CD8-positive, alpha-beta T cell (primary cell): ENCODE measurements at regions of chr9 and their contacts with region 1.

Region 1: GRCh38 chr9:128191406-128192046 is at the start of gene CIZ1:
- DNase-seq: peak; percentile 42 to 87 (median 75)
- ATAC-seq: peak; percentile 80
- H3K4me3 ChIP-seq: peak within 1 kb of the TSS; percentile 77 to 78
- H3K4me3 Mint-ChIP-seq: peak within 1 kb of the TSS; percentile 94
- H3K27ac ChIP-seq: peak within 1 kb of the TSS; percentile 58 to 68
- H3K27ac Mint-ChIP-seq: peak within 1 kb of the TSS; percentile 92
- H3K4me1 ChIP-seq: peaks cover 16% of the 10 kb centered on the region
- H3K4me1 Mint-ChIP-seq: peaks cover 35% of the 10 kb centered on the region
- H3K27me3 ChIP-seq: no peaks in the 10 kb centered on the region
- H3K27me3 Mint-ChIP-seq: no peaks in the 10 kb centered on the region
- CTCF ChIP-seq: peak; percentile 65
- total RNA-seq, gene CIZ1: 109 to 116 TPM

Region 2: DNA sequence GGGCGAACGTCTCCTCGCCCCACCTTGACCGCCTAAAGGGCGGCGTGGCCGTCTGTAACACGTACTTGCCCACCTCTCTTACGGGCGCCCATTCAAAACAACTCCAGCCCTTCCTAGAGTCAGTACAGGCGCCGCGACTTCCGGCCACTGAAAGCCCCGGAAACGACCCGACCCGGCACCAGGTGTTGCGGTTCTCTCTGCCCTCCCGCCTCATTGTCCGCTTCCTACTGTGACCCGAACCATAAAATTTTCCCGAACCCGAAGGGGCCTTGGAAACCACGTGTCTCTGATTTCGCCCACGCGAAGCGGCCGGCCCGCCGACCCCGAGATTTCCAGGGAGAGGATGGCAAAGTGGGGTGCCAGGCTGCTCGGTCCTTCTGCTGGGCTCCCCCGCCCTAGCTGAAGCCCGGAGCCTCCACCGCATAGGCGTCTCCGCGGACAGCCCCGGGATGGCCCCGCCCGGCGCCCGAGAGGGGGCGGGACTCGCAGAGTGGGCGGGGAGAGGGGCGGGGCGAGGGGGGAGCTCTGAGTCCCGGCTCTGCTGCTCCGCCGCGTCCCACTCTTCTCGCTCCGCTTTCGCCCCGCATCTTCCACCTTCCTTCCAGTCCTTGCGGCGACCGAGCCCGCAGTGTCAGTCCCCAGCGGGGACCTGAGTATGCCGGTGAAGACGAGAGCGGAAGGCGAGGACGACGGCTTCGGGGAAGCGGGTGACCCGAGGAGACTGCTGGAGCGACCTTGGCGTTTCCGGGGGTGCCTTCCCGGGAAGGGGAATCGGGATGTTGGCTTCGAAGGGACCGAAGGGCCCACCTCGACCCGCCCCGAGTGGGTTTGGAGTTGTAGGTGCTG is 63.3 kb before region 1 on chr9:
- CTCF ChIA-PET with region 1: no interaction called
- POLR2A ChIA-PET with region 1: no interaction called
- intact Hi-C with region 1: loop called in 1 of 2 experiments (anchors 2 kb)
- DNase-seq: peak; percentile 69 to 95 (median 83)
- ATAC-seq: peak; percentile 81
- H3K4me3 ChIP-seq: peak overlapping the region; percentile 99 to 100
- H3K4me3 Mint-ChIP-seq: peak overlapping the region; percentile 99
- H3K27ac ChIP-seq: peak overlapping the region; percentile 99
- H3K27ac Mint-ChIP-seq: peak overlapping the region; percentile 99
- H3K4me1 ChIP-seq: peaks cover 31% of the 10 kb centered on the region
- H3K4me1 Mint-ChIP-seq: peaks cover 38% of the 10 kb centered on the region
- H3K27me3 ChIP-seq: no peaks in the 10 kb centered on the region
- H3K27me3 Mint-ChIP-seq: peaks cover 2% of the 10 kb centered on the region
- CTCF ChIP-seq: no peak

Region 3: GRCh38 chr9:128203024-128203706 is 11.6 kb after region 1 on chr9 and contains the start of gene DNM1:
- CTCF ChIA-PET with region 1: interaction called, 5 read pairs
- POLR2A ChIA-PET with region 1: interaction called, 7 read pairs
- intact Hi-C with region 1: loop called (anchors 1 kb)
- DNase-seq: peak; percentile 52 to 88 (median 67)
- ATAC-seq: peak; percentile 99
- H3K4me3 ChIP-seq: peak within 1 kb of the TSS; percentile 55 to 66
- H3K4me3 Mint-ChIP-seq: peak within 1 kb of the TSS; percentile 72
- H3K27ac ChIP-seq: no peak within 1 kb of the TSS
- H3K27ac Mint-ChIP-seq: no peak within 1 kb of the TSS
- H3K4me1 ChIP-seq: peaks cover 13% of the 10 kb centered on the region
- H3K4me1 Mint-ChIP-seq: peaks cover 9% of the 10 kb centered on the region
- H3K27me3 ChIP-seq: peaks cover 3 to 9% of the 10 kb centered on the region in 2 experiments
- H3K27me3 Mint-ChIP-seq: peaks cover 10% of the 10 kb centered on the region
- CTCF ChIP-seq: peak; percentile 85
- total RNA-seq, gene DNM1: 1.4 to 1.5 TPM

Region 4: GRCh38 chr9:128275996-128276573 is 84.6 kb after region 1 on chr9 and contains the starts of genes GOLGA2 and SWI5:
- CTCF ChIA-PET with region 1: no interaction called
- POLR2A ChIA-PET with region 1: no interaction called
- intact Hi-C with region 1: loop called (anchors 1 to 2 kb)
- DNase-seq: peak; percentile 99 to 100 (median 100)
- ATAC-seq: peak; percentile 93
- H3K4me3 ChIP-seq: peak within 1 kb of the TSS; percentile 75 to 81
- H3K4me3 Mint-ChIP-seq: peak within 1 kb of the TSS; percentile 96
- H3K27ac ChIP-seq: peak within 1 kb of the TSS; percentile 76 to 81
- H3K27ac Mint-ChIP-seq: peak within 1 kb of the TSS; percentile 96
- H3K4me1 ChIP-seq: peaks cover 22% of the 10 kb centered on the region
- H3K4me1 Mint-ChIP-seq: peaks cover 32% of the 10 kb centered on the region
- H3K27me3 ChIP-seq: no peaks in the 10 kb centered on the region
- H3K27me3 Mint-ChIP-seq: no peaks in the 10 kb centered on the region
- CTCF ChIP-seq: no peak
- total RNA-seq, gene GOLGA2: 49.9 to 59.0 TPM
- total RNA-seq, gene SWI5: 3.5 to 4.3 TPM

Region 5: DNA sequence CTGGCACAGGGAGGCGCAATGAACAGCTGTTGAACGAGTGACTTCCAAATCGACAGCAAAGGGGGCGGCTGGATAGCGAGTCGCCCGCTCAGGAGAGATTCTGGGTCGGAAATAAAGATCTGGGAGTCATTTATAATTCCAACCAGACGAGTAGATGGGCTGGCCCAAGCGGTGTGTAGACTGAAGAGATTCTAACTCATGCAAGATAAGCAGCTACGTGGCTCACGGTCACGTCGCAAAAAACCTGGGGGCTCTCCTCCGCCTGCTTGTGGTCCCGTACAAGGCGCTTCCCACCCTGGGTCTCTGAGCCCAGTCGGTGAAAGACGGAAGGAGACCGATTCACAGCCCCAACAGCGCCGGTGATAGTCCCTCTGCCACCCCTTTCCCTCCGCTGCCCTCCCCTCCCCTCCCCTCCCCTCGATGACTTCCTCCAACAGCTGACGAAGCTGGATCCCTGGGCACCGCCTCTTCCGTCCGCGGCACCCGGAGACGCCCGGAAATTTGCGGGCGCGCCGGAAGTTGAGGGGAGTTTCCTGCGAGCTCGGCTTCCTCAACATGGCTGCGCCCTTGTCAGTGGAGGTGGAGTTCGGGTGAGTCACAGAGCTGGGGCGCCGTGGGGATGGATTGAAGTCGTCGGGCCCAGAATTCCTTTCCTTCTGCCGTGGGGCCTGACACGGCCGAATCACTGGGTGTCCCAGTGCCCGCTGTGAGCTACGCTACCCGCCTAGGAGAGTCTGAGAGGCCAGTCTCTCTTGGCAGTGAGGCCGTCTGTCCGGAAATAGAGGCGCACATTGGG is 179.5 kb after region 1 on chr9 and contains the start of gene URM1:
- CTCF ChIA-PET with region 1: no interaction called
- POLR2A ChIA-PET with region 1: no interaction called
- intact Hi-C with region 1: loop called in 1 of 2 experiments (anchors 2 kb)
- DNase-seq: peak; percentile 91 to 98 (median 96)
- ATAC-seq: peak; percentile 90
- H3K4me3 ChIP-seq: peak within 1 kb of the TSS; percentile 84 to 95
- H3K4me3 Mint-ChIP-seq: peak within 1 kb of the TSS; percentile 97
- H3K27ac ChIP-seq: peak within 1 kb of the TSS; percentile 76 to 96
- H3K27ac Mint-ChIP-seq: peak within 1 kb of the TSS; percentile 98
- H3K4me1 ChIP-seq: peaks cover 16% of the 10 kb centered on the region
- H3K4me1 Mint-ChIP-seq: peaks cover 43% of the 10 kb centered on the region
- H3K27me3 ChIP-seq: no peaks in the 10 kb centered on the region
- H3K27me3 Mint-ChIP-seq: no peaks in the 10 kb centered on the region
- CTCF ChIP-seq: no peak
- total RNA-seq, gene URM1: 30.4 to 31.5 TPM